ENCODE measurements at regions of chr15 and their contacts with region 1.

Region 1: DNA sequence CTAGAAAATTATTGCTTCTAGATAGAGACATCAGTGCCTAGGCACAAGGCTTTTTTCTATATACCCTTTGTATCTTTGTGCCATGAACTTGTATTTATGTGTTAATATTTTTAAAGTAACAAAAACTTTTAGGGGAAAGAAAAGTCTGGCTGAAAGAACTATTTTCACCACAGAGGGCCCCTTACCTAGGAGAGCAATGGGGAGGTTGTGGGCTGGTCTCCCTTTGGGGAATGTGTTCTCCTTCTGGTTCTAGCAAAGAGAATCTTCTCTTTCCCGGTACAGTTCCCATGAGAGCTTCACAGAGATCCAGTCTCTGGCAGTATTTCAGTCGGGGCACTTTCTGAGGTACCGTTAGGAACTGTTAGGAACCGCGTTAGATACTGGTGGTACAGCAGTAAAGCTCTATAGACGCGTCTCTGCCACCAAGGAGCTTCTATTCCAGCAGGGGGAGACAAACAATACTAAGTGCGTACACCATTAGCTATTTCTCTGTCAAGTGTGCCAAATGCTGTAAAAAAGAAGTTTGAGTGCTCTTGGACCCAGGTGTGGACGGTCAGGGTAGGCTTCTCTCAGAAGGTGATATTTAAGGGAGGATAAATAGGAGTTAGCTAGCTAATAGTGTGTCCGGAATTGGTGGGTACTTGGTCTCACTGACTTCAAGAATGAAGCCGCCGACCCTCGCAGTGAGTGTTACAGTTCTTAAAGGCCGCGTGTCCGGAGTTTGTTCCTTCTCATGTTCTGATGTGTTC is 4.6 kb upstream of the EPB42 start:
- DNase-seq: peak; percentile 65
- H3K4me3 Mint-ChIP-seq: no peak overlapping the region
- H3K27ac Mint-ChIP-seq: no peak overlapping the region
- H3K4me1 Mint-ChIP-seq: peaks cover 4% of the 10 kb centered on the region
- H3K27me3 Mint-ChIP-seq: peaks cover 15% of the 10 kb centered on the region

Region 2: DNA sequence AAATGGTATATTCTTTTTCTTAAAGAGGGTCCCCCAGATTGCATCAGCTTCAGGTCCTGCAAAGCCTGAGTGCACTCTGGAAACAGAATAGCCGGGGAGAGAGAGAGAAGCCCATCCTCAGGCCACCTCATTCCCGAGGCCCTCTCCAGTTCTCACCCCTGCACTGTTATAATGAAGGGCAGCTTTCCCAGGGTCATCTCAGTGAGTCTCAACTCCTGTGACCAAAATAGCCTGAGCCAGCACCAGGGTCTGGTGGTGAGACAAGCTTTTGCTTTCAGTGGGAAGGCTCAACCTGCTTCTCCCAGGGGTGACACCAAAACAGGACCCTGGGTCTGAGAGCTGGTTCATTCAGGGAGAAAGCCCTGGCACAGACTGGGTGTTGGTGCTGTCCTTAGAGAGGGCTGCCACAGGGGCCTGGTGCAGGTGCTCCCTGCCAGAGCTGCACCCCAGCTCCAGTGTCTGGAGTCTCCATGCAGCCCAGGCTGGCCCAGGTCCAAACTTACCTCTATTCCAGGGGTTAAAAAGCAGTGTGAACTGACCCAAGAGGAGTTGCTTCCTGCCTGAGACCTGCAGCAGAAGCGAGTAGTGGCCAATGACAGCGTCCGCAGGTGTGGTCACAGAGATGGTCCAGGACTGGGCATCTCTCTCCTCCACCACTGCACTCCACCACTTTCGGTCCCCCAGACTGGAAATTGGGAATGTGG is 10.6 kb before region 1 on chr15:
- CTCF ChIA-PET with region 1: interaction called, 18 read pairs
- POLR2A ChIA-PET with region 1: no interaction called
- DNase-seq: no peak
- H3K4me3 Mint-ChIP-seq: no peak overlapping the region
- H3K27ac Mint-ChIP-seq: no peak overlapping the region
- H3K4me1 Mint-ChIP-seq: no peaks in the 10 kb centered on the region
- H3K27me3 Mint-ChIP-seq: peaks cover 1% of the 10 kb centered on the region

Region 3: DNA sequence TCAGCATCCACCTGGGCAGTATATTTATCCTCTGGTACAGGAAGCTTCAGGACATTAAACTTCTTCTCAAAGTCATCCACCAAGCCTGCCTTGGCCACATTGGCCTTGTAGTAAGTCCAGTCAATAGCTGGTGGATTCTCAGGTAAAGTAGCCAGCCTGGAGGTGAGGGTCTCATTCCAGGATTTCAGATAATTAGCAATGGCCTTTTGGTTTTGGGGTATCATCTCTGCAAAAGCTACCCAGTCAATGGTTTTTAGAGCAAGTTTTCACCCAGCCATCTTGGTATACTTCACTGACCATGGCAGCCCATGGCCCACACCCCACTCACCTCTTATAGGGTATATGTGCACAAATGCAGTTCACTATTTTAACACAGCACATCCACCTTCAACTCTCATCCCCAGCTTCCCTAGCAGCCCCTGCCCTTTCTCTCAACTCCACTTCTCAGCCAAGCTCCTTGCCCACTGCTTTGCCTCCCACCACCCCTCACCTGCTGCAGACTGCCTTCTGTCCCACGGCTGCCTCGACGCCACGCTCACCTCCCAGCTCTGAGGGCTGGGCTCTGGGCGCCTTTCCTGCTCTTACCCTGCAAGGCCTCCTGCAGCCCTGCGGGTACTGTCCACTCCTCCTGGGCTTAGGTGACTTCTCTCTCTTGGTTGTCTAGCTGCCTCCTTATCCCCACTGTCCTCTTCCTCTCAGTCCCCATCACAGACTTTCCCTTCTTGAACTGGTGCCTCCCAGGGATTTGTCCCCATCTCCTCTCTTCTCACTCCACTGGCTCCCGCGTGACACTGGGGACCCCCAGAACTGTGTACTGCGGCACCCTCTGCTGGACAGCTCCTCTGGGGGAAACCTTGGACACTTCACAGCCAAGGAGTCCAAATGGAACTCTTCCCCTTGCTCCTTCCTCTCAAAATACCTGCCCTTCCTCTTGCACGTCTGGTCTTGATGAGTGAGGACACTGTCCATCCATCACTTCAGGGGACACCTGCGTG is 43.0 kb after region 1 on chr15:
- CTCF ChIA-PET with region 1: interaction called, 32 read pairs
- POLR2A ChIA-PET with region 1: no interaction called
- DNase-seq: no peak
- H3K4me3 Mint-ChIP-seq: no peak overlapping the region
- H3K27ac Mint-ChIP-seq: no peak overlapping the region
- H3K4me1 Mint-ChIP-seq: peaks cover 14% of the 10 kb centered on the region
- H3K27me3 Mint-ChIP-seq: peaks cover 24% of the 10 kb centered on the region

Region 4: DNA sequence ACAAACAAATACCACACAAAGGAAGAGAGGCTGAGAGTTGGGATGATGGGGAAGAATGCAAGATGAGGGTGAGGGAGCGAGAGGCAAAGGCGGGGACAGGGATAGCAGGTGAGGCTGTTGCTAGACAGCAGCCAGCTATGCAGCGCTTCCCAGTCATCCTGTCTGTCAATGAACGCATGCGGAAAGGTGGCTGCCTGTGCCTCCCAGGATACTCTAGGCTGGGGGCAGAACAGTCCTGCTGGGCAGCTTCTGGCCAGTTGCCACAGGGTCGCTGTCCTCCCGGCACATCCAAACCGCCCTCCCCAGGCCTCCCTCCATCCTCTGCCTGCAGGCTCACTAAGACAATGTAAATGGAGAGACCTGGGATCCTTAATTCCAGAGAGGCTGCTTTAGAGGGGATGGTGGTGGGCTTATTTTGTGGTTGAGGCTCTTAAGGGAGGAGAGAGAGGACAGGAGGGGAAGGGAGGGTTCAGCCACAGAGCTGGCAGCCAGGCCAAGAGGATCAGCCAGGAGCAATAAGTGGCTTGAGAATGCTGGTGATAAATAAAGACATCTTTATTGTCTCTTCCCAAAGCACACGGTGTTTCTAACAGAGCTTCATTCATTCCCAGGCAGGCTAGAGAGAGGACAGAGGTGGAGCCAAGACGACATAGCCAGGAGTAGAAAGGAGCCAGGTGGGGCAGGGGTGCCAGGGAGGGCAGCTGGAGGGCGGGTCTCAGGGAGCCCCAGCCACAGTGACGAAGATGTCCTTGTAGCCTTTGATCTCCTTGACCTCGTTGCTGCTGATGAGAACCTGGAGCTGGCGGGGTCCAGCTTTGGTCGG is 50.6 kb after region 1 on chr15:
- CTCF ChIA-PET with region 1: interaction called, 19 read pairs
- POLR2A ChIA-PET with region 1: no interaction called
- DNase-seq: no peak
- H3K4me3 Mint-ChIP-seq: no peak overlapping the region
- H3K27ac Mint-ChIP-seq: no peak overlapping the region
- H3K4me1 Mint-ChIP-seq: peaks cover 4% of the 10 kb centered on the region
- H3K27me3 Mint-ChIP-seq: peaks cover 8% of the 10 kb centered on the region

Region 5: GRCh38 chr15:43285609-43286037 is 60.2 kb after region 1 on chr15:
- CTCF ChIA-PET with region 1: interaction called, 51 read pairs
- POLR2A ChIA-PET with region 1: no interaction called
- DNase-seq: peak; percentile 77
- H3K4me3 Mint-ChIP-seq: no peak overlapping the region
- H3K27ac Mint-ChIP-seq: no peak overlapping the region
- H3K4me1 Mint-ChIP-seq: peaks cover 11% of the 10 kb centered on the region
- H3K27me3 Mint-ChIP-seq: peaks cover 9% of the 10 kb centered on the region

Region 6: GRCh38 chr15:43473885-43474284 is 248.5 kb after region 1 on chr15:
- CTCF ChIA-PET with region 1: no interaction called
- POLR2A ChIA-PET with region 1: no interaction called
- DNase-seq: no peak
- H3K4me3 Mint-ChIP-seq: no peak overlapping the region
- H3K27ac Mint-ChIP-seq: no peak overlapping the region
- H3K4me1 Mint-ChIP-seq: peaks cover 2% of the 10 kb centered on the region
- H3K27me3 Mint-ChIP-seq: no peaks in the 10 kb centered on the region

Measured in activated CD4-positive, alpha-beta T cell treated with anti-CD3 and anti-CD28 coated beads, Interleukin-2, amount 10 ng/mL, durations not matched to agents 7 days and 5 days (primary cell).